GM12878 (cell line): ENCODE measurements at regions of chr14 and their contacts with region 1.

Region 1: GRCh38 chr14:74762917-74763802 is at the start of gene YLPM1:
- DNase-seq: peak; percentile 97
- ATAC-seq: peak; percentile 93
- H3K4me3 ChIP-seq: peak within 1 kb of the TSS; percentile 94
- H3K27ac ChIP-seq: peak within 1 kb of the TSS; percentile 76
- H3K4me1 ChIP-seq: no peaks in the 10 kb centered on the region
- H3K27me3 ChIP-seq: no peaks in the 10 kb centered on the region
- CTCF ChIP-seq: peak; percentile 38 to 80 (median 54); a peak in 5 of 6 replicates
- EP300 ChIP-seq: 0 out of 4 replicates have a peak, but pooled peaks have one; percentile 6 to 34
- POLR2A ChIP-seq: peak; percentile 97
- RAD21 ChIP-seq: no peak
- polyA plus RNA-seq, gene YLPM1: 11.1 to 15.1 TPM

Region 2: DNA sequence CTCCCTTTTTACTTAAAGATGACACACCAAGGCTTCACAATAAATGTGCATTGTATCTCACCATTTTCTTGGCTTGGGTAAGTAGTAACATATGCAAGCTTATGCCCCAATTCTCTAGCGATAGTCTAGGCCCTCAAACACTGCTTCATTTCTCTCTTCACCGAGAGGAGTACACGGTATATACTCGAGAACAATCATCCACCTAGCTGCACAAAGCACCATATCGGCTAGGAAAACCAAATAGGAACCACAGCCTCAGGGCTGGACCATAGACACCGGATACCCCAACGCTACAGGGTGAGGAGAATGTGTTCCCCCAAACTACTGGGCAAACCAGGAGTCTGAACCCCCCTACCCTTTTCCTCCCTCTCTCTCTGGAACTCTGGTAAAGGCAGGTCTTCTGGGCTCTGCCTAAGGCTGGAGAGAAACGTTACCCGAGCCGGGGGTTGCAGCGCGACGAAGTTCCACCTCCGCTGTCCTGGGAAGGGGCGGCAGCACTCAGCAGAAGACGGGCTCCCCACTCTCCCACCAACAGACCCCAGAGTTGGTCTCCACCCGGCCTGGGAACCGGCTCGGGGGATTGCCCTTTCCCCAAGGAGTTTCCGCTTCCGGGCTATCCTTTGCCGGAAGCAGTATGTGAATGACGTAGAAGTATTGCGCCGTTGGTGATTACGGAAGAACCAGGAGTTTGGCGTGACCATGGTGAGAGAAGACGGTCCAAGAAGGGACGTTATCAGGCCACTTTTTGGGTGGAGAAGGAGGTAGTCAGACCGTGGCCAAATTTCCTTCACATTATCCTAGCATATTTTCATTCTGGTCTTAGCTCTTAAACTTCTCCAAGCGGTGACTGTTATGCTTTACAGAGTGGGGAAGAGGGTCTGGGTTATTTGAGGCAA is 50.4 kb before region 1 on chr14 and contains the starts of genes AREL1 and FCF1:
- CTCF ChIA-PET with region 1: interaction called, 3 read pairs
- POLR2A ChIA-PET with region 1: interaction called, 6 read pairs
- RAD21 ChIA-PET with region 1: no interaction called
- SMC1A ChIA-PET with region 1: interaction called, 3 read pairs
- in situ Hi-C with region 1: no loop called
- intact Hi-C with region 1: loop called (anchors 5 kb)
- DNase-seq: peak; percentile 54
- ATAC-seq: peak; percentile 95
- H3K4me3 ChIP-seq: peak within 1 kb of the TSS; percentile 88
- H3K27ac ChIP-seq: peak within 1 kb of the TSS; percentile 74
- H3K4me1 ChIP-seq: peaks cover 3% of the 10 kb centered on the region; the same call in 1 of the 2 replicates
- H3K27me3 ChIP-seq: no peaks in the 10 kb centered on the region
- CTCF ChIP-seq: no peak
- EP300 ChIP-seq: 0 out of 4 replicates have a peak, but pooled peaks of 1 of the 2 experiments have one; percentile 19
- POLR2A ChIP-seq: peak; percentile 90
- RAD21 ChIP-seq: no peak
- polyA plus RNA-seq, gene AREL1: 6.2 to 7.3 TPM
- polyA plus RNA-seq, gene FCF1: 6.2 to 9.7 TPM

Region 3: DNA sequence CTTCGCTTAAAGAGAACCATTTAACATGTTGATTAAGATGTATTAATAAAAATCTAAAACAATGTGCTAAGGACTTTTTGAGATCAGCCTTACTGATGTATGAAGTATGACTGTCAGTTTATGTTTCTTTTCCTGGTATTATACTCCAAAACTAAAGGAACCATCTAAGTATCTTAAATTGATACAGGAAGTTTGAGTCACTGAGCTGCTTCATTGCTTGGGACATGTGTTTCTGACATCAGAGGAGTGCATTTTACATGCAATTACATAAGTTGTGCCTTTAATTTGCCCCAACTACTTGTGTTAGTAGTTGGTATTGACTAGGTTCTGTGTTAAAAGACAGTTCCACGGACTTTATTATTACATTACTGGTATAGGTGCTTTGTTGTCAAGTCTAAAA is 61.8 kb after region 1 on chr14:
- CTCF ChIA-PET with region 1: no interaction called
- POLR2A ChIA-PET with region 1: no interaction called
- RAD21 ChIA-PET with region 1: no interaction called
- SMC1A ChIA-PET with region 1: no interaction called
- in situ Hi-C with region 1: no loop called
- intact Hi-C with region 1: no loop called
- DNase-seq: no peak
- ATAC-seq: no peak
- H3K4me3 ChIP-seq: no peak overlapping the region
- H3K27ac ChIP-seq: no peak overlapping the region
- H3K4me1 ChIP-seq: no peaks in the 10 kb centered on the region
- H3K27me3 ChIP-seq: no peaks in the 10 kb centered on the region
- CTCF ChIP-seq: no peak
- EP300 ChIP-seq: no peak
- POLR2A ChIP-seq: no peak
- RAD21 ChIP-seq: no peak

Region 4: DNA sequence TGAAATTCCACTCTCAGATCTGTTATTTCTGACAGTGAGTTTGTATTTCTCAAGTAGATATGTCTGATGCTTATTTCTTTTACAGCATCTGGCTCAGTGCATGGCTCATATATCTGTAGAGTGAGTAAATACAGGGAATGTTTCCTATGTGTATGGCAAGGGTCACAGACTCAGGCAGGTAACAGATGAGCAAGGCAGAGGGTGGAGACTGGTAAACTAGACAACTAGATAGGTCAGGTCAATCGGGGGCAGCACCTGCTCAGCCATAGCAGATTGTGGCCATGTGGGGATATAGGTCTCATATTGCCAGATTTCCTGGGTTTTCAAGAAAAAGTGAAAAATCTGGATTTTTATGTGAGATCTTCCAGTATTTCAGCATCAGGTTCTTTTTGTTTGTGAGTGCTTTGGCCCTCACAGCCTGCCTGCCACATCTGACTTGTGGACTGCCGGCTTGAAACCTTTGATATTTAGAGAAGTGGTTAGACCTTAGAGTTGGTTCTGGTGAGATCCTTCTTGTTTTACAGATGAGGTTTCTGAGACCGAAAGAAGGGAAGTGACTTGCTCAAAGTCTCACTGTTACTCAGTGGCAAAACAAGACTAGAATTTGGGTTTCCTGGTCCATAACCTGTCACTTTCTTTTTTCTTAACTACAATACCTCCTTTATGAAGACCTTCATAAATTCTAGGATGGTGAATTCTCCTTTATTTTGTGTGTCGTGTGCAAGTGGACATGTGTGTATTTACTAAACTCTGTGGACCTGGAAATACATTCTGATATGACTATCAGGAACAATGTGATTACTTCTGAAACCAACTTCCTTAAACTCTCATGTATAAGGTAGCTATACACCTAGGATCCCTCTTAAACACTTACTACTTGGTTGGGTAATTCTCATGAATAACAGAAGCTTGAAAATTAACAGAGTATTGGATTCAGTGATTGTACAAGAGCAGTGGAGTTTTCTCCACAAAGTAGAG is 78.4 kb after region 1 on chr14:
- CTCF ChIA-PET with region 1: interaction called, 7 read pairs
- POLR2A ChIA-PET with region 1: interaction called, 3 read pairs
- RAD21 ChIA-PET with region 1: no interaction called
- SMC1A ChIA-PET with region 1: interaction called, 3 read pairs
- in situ Hi-C with region 1: no loop called
- intact Hi-C with region 1: loop called (anchors 2 kb)
- DNase-seq: peak; percentile 77
- ATAC-seq: peak; percentile 95
- H3K4me3 ChIP-seq: peak overlapping the region; percentile 25; the same call in 1 of the 2 replicates
- H3K27ac ChIP-seq: peak overlapping the region; percentile 86
- H3K4me1 ChIP-seq: peaks cover 44% of the 10 kb centered on the region
- H3K27me3 ChIP-seq: no peaks in the 10 kb centered on the region
- CTCF ChIP-seq: no peak
- EP300 ChIP-seq: peak; percentile 47 to 74; a peak in 3 of 4 replicates
- POLR2A ChIP-seq: no peak
- RAD21 ChIP-seq: no peak

Region 5: DNA sequence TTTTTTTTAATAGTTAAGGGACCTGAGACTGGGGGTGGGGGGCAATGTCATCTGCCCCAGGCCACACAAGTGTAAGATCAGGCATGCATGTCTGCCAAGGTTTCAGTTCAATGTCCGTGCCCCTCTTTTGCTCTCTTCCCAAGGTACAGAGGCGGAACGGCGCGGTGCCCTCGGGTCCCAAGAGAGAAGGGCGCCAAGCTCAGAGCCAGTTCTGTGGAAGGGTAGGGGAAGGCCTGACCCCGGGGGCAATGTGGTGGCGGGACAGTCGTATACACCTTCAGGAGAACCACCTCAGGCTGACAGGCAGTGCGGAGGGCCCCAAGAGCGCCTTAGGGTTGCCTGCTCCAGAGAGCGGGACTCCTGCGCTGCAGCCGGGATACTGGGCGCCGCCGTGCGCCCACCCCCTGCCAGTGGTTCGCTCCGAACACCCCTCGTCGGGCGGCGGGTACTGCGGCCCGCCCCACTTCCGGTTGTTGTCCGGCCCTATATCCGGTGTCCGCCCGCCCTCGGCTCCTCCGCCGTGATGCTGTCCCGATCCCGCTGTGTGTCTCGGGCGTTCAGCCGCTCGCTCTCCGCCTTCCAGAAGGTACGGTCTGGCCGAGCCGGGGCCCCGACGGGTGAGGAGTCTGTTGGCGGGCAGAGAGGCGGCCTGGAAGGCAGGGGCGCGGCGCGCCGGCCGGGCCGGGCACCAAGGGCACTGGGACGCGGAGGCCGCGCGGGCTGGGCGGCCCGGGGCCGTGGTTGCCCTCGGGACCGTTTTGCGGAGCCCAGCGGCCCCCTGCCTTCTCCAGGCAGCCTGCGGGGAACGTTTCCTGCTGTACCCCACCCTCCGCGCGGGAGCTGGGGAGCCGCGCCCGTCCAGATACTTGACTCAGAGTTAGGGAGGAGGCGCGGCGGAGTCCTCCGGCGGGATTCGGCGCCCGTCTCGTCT is 118.5 kb after region 1 on chr14 and contains the start of gene DLST:
- CTCF ChIA-PET with region 1: no interaction called
- POLR2A ChIA-PET with region 1: no interaction called
- RAD21 ChIA-PET with region 1: no interaction called
- SMC1A ChIA-PET with region 1: no interaction called
- in situ Hi-C with region 1: no loop called
- intact Hi-C with region 1: loop called (anchors 2 kb)
- DNase-seq: peak; percentile 39
- ATAC-seq: peak; percentile 94
- H3K4me3 ChIP-seq: peak within 1 kb of the TSS; percentile 90
- H3K27ac ChIP-seq: peak within 1 kb of the TSS; percentile 81
- H3K4me1 ChIP-seq: peaks cover 8% of the 10 kb centered on the region
- H3K27me3 ChIP-seq: no peaks in the 10 kb centered on the region
- CTCF ChIP-seq: no peak
- EP300 ChIP-seq: no peak
- POLR2A ChIP-seq: peak; percentile 95
- RAD21 ChIP-seq: no peak
- polyA plus RNA-seq, gene DLST: 2.9 to 12.2 TPM